IMR-90 (cell line): ENCODE measurements at regions of chr15 and their contacts with region 1.

Region 1: GRCh38 chr15:68924866-68925560 is 5.3 kb upstream of the SPESP1 start:
- DNase-seq: peak; percentile 71
- ATAC-seq: peak; percentile 98
- H3K4me3 ChIP-seq: no peak overlapping the region
- H3K27ac ChIP-seq: no peak overlapping the region
- H3K4me1 ChIP-seq: no peaks in the 10 kb centered on the region
- H3K27me3 ChIP-seq: peaks cover 15% of the 10 kb centered on the region
- CTCF ChIP-seq: peak; percentile 93
- POLR2A ChIP-seq: no peak
- RAD21 ChIP-seq: peak; percentile 95

Region 2: GRCh38 chr15:68550481-68551295 is 374.3 kb before region 1 on chr15:
- CTCF ChIA-PET with region 1: interaction called, 6 read pairs
- POLR2A ChIA-PET with region 1: no interaction called
- dilution Hi-C with region 1: no loop called
- in situ Hi-C with region 1: loop called (anchors 5 kb)
- intact Hi-C with region 1: no loop called
- DNase-seq: peak; percentile 44
- ATAC-seq: peak; percentile 67
- H3K4me3 ChIP-seq: no peak overlapping the region
- H3K27ac ChIP-seq: no peak overlapping the region
- H3K4me1 ChIP-seq: peaks cover 5% of the 10 kb centered on the region
- H3K27me3 ChIP-seq: peaks cover 2% of the 10 kb centered on the region
- CTCF ChIP-seq: peak; percentile 72
- POLR2A ChIP-seq: no peak
- RAD21 ChIP-seq: peak; percentile 71

Region 3: DNA sequence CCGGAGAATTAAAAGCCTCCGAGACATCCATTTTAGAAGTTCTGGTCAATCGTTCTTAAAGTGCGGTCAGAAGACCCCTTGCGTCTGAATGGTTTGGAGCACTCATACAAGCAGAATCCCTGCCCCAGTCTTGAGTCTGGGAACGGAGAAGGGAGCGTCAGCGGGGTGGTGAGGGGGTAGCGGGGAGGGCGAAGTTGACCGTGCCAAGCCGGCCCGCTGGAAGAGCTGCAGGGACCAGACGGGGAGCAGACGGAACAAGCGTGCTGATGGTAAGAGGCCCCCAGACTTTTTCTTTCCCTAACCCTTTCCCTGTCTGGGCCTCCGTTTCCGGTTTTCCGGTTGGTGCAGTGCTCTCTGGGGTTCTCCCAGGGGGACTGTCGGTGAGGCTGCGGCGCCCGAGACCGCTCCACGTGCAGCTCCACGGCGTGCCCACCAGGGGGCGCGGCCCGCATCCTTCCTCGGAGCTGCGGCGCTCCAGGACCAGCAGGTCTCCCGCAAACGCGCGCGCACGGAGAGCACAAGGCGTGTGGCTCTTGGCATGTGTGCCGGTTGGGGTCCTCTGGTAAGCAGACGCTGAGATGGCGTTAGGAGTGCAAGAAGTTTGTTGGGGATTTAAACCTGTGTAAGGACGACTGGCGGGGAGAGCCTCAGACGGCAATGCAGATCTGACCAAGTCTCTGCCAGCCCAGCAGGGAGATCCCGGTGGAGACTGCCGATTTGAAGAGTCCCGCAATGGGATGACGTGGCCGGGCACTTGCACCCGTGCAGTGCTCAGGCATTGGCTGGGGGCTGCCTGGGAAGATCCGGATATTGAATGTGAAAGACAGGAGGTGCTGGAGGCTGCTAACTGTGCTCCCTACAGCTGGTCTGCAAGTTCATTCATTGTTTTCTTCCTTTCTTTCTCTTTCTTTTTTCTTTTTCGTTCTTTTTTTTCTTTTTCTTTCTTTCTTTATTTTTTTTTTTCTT is 365.4 kb before region 1 on chr15:
- CTCF ChIA-PET with region 1: interaction called, 3 read pairs
- POLR2A ChIA-PET with region 1: no interaction called
- dilution Hi-C with region 1: no loop called
- in situ Hi-C with region 1: loop called (anchors 5 kb)
- intact Hi-C with region 1: loop called (anchors 2 kb)
- DNase-seq: peak; percentile 70
- ATAC-seq: peak; percentile 99
- H3K4me3 ChIP-seq: peak overlapping the region; percentile 51
- H3K27ac ChIP-seq: no peak overlapping the region
- H3K4me1 ChIP-seq: no peaks in the 10 kb centered on the region
- H3K27me3 ChIP-seq: peaks cover 4% of the 10 kb centered on the region; the same call in 1 of the 2 replicates
- CTCF ChIP-seq: peak; percentile 90
- POLR2A ChIP-seq: no peak
- RAD21 ChIP-seq: peak; percentile 87

Region 4: GRCh38 chr15:68909601-68910100 is 15.4 kb before region 1 on chr15:
- CTCF ChIA-PET with region 1: interaction called, 10 read pairs
- POLR2A ChIA-PET with region 1: no interaction called
- dilution Hi-C with region 1: no loop called
- in situ Hi-C with region 1: no loop called
- intact Hi-C with region 1: no loop called
- DNase-seq: no peak
- ATAC-seq: no peak
- H3K4me3 ChIP-seq: no peak overlapping the region
- H3K27ac ChIP-seq: no peak overlapping the region
- H3K4me1 ChIP-seq: peaks cover 2% of the 10 kb centered on the region; the same call in 1 of the 2 replicates
- H3K27me3 ChIP-seq: peaks cover 29% of the 10 kb centered on the region
- CTCF ChIP-seq: no peak
- POLR2A ChIP-seq: no peak
- RAD21 ChIP-seq: no peak

Region 5: DNA sequence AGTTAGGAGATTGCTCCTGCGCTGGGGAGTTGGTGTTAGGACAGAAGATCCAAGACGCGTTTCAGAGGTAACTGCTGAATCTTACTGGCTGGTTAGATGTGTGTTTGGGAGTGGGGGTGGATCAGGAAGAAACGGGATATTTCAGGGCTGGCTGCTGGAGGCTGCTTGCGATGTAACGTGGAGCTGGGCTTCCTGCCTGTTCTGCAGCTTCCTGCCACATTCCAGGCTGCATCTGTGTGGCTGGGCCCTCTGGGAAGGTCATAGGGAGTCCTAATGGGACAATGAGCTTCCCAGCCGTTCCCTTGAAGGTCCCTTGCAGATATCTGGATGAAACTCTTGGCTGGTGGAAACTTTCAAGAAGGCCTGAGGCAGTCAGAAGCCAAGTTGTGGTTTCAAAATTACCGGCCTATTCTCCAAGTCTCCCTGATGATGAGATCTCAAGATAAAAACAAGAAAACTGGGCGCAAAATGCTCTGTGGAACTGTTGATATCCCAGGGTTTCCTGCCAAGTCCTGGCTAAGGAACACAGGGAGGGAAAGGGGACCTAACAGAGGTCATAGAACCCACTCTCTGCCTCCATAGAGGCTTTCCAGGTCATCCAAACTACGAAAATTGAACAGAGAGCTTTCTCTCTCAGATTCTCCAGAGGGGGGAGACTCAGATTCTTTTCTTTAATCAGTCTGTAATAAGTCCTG is 156.4 kb after region 1 on chr15:
- CTCF ChIA-PET with region 1: no interaction called
- POLR2A ChIA-PET with region 1: no interaction called
- dilution Hi-C with region 1: no loop called
- in situ Hi-C with region 1: no loop called
- intact Hi-C with region 1: no loop called
- DNase-seq: peak; percentile 40
- ATAC-seq: peak; percentile 73
- H3K4me3 ChIP-seq: no peak overlapping the region
- H3K27ac ChIP-seq: peak overlapping the region; percentile 52; the same call in 1 of the 2 replicates
- H3K4me1 ChIP-seq: peaks cover 9% of the 10 kb centered on the region
- H3K27me3 ChIP-seq: peaks cover 15% of the 10 kb centered on the region
- CTCF ChIP-seq: no peak
- POLR2A ChIP-seq: no peak
- RAD21 ChIP-seq: no peak

Region 6: GRCh38 chr15:70014860-70015490 is 1090.0 kb after region 1 on chr15:
- CTCF ChIA-PET with region 1: no interaction called
- POLR2A ChIA-PET with region 1: no interaction called
- dilution Hi-C with region 1: no loop called
- in situ Hi-C with region 1: no loop called
- intact Hi-C with region 1: no loop called
- DNase-seq: no peak
- ATAC-seq: no peak
- H3K4me3 ChIP-seq: no peak overlapping the region
- H3K27ac ChIP-seq: no peak overlapping the region
- H3K4me1 ChIP-seq: no peaks in the 10 kb centered on the region
- H3K27me3 ChIP-seq: peaks cover 90% of the 10 kb centered on the region
- CTCF ChIP-seq: no peak
- POLR2A ChIP-seq: no peak
- RAD21 ChIP-seq: no peak